Aorta (tissue), 5 donors: ENCODE measurements at regions of chr9 and their contacts with region 1.

Region 1: DNA sequence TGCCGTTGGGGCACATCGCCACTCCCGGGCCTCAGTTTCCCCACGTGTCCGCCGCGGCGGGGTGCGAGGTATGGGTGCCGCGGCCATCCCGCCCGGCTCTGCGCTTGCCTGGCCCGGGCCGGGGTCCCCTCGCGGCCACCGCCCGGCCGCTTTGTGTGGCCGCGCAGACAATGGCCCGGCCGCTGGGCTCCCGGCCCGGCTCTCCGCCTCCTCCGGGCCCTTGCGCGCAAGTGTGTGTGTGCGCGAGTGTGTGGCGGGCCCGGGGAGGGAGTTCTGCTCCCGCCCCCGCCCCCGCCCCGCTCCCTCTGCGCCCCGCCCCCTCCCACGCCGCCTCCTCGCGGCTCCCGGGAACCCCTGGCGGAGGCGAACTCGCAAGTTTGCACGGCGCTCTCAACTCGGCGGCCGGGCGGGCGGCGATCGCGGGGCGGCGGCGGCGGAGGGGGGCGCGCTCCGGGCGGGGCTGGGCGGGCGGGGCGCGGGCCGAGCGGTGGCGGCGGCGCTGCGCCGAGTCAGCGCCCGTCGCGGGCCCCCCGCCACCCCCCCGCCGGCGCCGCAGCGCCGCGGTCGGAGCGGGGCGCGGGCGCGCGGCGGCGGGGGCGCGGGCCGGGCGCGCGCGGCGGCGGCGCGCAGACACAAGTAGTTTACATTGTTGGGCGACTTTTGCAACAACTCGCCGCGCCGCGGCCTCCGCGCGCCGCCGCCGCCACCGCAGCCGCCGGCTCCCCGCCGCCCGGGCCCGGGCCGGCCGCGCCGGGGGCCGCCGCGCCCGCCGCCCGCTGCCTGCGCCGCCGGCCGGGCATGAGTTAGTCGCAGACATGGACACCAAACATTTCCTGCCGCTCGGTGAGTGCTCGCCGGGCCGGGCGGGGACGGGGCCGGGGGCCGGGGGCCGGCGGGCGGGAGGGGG is at the start of gene RXRA:
- DNase-seq: peak; percentile 90 to 94
- ATAC-seq: peak; percentile 74
- H3K4me3 ChIP-seq: peak within 1 kb of the TSS; percentile 54 to 73
- H3K27ac ChIP-seq: peak within 1 kb of the TSS; percentile 86 to 93
- H3K4me1 ChIP-seq: no peaks in the 10 kb centered on the region
- H3K27me3 ChIP-seq: no peaks in the 10 kb centered on the region
- total RNA-seq, gene RXRA: 47.5 to 67.8 TPM

Region 2: DNA sequence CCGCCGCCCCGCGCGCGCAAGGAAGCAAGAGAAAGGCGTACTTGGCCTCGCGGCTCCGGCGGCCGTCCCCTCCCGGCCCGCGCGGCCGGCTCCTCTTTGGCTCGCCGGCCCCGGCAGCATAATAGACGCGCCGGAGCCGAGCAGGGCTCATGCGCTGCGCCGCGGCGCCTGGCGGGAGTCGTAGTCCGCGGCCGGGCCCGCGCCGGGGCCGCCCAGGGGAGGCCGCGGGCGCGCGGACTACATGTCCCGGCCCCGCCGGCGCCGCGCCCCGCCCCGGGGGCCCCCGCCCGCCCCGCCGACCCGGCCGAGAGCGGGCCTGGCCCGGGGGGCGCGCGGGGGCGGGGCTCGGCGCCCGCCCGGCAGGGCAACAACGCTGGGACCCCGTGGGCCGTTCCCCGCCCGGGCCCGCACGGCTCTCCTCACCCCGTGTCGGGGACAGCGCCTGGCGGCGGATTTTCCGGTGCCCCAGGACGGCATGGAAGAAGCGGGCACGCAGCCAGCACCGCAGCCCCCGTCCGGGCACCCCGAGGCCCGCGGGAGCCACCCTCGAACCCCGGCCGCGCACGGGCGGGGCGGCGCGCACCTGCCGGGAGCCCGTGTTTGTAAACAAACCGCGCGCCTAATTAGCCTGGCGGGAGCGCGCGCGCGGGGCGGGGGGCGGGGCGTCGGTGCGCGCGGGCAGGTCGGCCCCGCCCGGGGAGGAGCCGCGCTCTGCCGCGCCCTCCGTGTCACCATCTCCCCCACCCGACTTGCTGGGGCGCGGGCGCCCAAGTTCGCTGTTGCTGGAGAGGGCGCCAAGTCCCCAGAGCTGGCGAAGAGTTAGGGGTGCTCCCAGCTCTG is 257.9 kb before region 1 on chr9 and contains the start of gene BRD3:
- intact Hi-C with region 1: loop called in 1 of 2 experiments (anchors 10 kb)
- DNase-seq: peak; percentile 91 to 93
- ATAC-seq: peak; percentile 93
- H3K4me3 ChIP-seq: peak within 1 kb of the TSS; percentile 76 to 99
- H3K27ac ChIP-seq: peak within 1 kb of the TSS; percentile 38 to 94
- H3K4me1 ChIP-seq: no peaks in the 10 kb centered on the region
- H3K27me3 ChIP-seq: no peaks in the 10 kb centered on the region
- total RNA-seq, gene BRD3: 24.4 to 38.0 TPM

Region 3: GRCh38 chr9:134208310-134208841 is 117.7 kb before region 1 on chr9:
- intact Hi-C with region 1: loop called in 1 of 2 experiments (anchors 2 kb)
- DNase-seq: peak; percentile 86 to 92
- ATAC-seq: no peak
- H3K4me3 ChIP-seq: no peak overlapping the region
- H3K27ac ChIP-seq: no peak overlapping the region
- H3K4me1 ChIP-seq: no peaks in the 10 kb centered on the region
- H3K27me3 ChIP-seq: no peaks in the 10 kb centered on the region

Region 4: GRCh38 chr9:134283111-134283515 is 43.0 kb before region 1 on chr9:
- intact Hi-C with region 1: loop called in 1 of 2 experiments (anchors 5 kb)
- DNase-seq: peak; percentile 77 to 93
- ATAC-seq: peak; percentile 75
- H3K4me3 ChIP-seq: no peak overlapping the region
- H3K27ac ChIP-seq: peak overlapping the region in 1 of 2 donors; percentile 6
- H3K4me1 ChIP-seq: no peaks in the 10 kb centered on the region
- H3K27me3 ChIP-seq: no peaks in the 10 kb centered on the region

Region 5: GRCh38 chr9:134365791-134366688 is 40.0 kb after region 1 on chr9:
- intact Hi-C with region 1: loop called (anchors 5 kb)
- DNase-seq: peak; percentile 94 to 95
- ATAC-seq: peak; percentile 84
- H3K4me3 ChIP-seq: no peak overlapping the region
- H3K27ac ChIP-seq: peak overlapping the region in 1 of 2 donors; percentile 2
- H3K4me1 ChIP-seq: no peaks in the 10 kb centered on the region
- H3K27me3 ChIP-seq: no peaks in the 10 kb centered on the region

Region 6: DNA sequence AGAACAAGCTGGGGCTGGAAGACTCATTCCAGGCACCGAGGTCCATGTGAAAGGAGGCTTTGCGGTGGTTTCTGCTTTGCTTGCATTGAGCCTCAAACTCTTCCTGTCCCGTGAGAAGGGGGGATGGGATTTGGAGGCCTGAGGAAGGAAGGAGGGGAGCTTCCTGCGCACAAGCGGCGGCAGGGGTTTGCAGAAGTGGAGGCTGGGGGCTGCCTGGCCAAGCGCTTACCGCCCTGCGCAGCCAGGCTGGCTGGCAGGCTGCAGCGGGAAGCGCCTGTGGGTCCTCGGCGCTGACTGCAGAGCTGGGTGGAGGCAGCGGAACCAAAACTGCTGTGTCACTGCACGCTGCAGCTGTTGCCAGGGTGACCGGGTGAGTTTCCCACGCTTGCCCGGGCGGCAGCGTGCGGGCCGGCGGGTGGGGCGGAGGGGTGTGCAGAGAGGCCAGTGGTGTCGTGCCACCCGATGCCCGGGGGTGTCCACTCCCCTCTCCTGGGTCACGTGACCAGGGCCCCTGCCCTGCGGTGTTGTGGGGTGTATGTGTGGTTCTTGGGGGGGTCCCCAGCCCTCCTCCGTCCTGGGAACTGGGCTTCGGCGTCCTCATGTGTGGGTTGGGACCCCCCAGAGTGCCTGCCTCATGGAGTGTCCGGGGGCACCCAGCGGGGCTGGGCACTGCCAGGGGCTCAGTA is 81.2 kb after region 1 on chr9:
- intact Hi-C with region 1: loop called in 1 of 2 experiments (anchors 2 kb)
- DNase-seq: peak; percentile 97 to 98
- ATAC-seq: peak; percentile 89
- H3K4me3 ChIP-seq: no peak overlapping the region
- H3K27ac ChIP-seq: peak overlapping the region in 1 of 2 donors; percentile 48
- H3K4me1 ChIP-seq: peaks cover 2 to 3% of the 10 kb centered on the region in 2 donors
- H3K27me3 ChIP-seq: no peaks in the 10 kb centered on the region

Region 7: DNA sequence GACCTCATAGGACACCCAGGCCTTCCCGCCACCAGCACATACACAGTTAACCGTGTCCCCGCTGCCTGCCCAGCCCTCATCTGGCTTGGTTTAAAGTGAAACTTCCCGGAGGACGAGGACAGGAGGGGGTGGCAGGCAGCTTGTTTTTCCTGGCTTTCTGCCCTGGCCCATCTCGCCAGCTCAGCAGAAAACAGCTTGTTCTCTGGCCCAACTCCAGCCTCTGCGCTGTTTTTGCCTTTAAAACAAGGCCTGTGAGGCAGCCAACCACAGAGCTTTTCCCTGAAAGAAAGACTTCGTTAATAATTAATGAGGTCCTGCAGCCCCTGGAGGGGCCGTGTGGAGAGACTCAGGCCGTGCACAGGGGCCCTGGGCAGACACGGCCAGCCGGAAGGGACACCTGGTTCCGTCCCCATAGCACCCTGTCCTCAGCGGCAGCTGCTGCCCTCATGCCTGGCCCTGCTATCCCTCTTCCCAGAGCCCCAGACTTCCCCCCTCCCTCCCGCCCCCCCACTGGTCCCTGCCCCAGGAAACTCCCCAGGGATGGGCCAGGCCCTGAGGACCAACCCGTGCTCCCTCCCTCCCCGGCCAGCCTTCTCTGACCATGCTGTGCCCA is 108.9 kb after region 1 on chr9:
- intact Hi-C with region 1: loop called (anchors 2 to 10 kb)
- DNase-seq: peak; percentile 97 to 98
- ATAC-seq: peak; percentile 86
- H3K4me3 ChIP-seq: no peak overlapping the region
- H3K27ac ChIP-seq: peak overlapping the region in 1 of 2 donors; percentile 38
- H3K4me1 ChIP-seq: no peaks in the 10 kb centered on the region
- H3K27me3 ChIP-seq: no peaks in the 10 kb centered on the region